A549 (cell line): ENCODE measurements at regions of chr14 and their contacts with region 1.

Region 1: GRCh38 chr14:67589204-67589770 is 10.8 kb downstream of the PIGH start:
- DNase-seq: no peak
- ATAC-seq: no peak
- H3K4me3 ChIP-seq: no peak overlapping the region
- H3K27ac ChIP-seq: no peak overlapping the region
- H3K4me1 ChIP-seq: no peaks in the 10 kb centered on the region
- CTCF ChIP-seq: no peak
- EP300 ChIP-seq: no peak
- POLR2A ChIP-seq: no peak
- RAD21 ChIP-seq: no peak

Region 2: GRCh38 chr14:67599698-67600561 is 10.6 kb after region 1 on chr14 and contains the start of gene PIGH:
- CTCF ChIA-PET with region 1: interaction called, 25 read pairs
- POLR2A ChIA-PET with region 1: interaction called, 5 read pairs
- DNase-seq: peak; percentile 87 to 91
- ATAC-seq: peak; percentile 98 to 99
- H3K4me3 ChIP-seq: peak within 1 kb of the TSS; percentile 86
- H3K27ac ChIP-seq: peak within 1 kb of the TSS; percentile 86 to 89
- H3K4me1 ChIP-seq: peaks cover 11% of the 10 kb centered on the region; the same call in 2 of the 3 replicates
- CTCF ChIP-seq: peak; percentile 56
- EP300 ChIP-seq: no peak
- POLR2A ChIP-seq: peak; percentile 71
- RAD21 ChIP-seq: no peak; a peak in 1 of 5 replicates
- polyA plus RNA-seq, gene PIGH: 37.2 and 46.2 TPM in 2 replicates